Heart right ventricle (tissue), 16 donors: ENCODE measurements at regions of chr15 and their contacts with region 1.

Region 1: DNA sequence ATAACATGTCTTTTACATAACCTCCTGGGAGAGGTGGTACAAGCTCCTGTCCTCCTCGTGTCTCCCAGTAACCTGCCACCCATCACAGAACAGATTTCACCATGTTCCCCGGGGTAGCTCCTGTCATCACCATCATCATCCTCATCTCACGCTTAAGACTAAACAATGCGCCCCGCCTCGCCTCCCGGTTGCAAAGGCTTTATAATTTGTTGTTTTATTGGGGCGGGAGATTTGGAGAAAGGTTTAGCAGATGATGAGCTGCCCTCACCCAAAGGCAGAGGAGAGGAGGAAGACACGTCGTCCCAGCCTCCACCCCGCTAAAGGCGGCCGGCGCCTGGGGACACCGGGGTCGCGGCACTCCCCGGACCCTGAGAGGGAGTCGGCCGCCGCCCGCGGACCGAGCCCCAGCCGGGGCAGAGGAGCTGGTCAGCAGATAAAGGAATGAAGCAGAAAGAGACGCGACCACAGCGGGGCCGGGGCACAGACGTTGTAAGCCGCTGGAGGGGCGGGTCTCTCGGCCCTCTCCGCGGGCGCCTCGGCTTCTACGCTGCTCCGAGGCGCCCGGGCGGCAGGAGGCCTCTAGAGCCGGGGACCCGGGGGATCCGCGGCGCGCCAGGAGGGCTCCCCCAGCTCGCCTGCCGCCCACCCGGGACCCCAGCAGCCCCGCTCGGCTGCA is 589 bp downstream of the HERC1 start:
- DNase-seq: peak; percentile 25 to 41
- ATAC-seq: peak; percentile 33 to 82 (median 58)
- H3K4me3 ChIP-seq: peak overlapping the region; percentile 74 to 97 (median 94)
- H3K27ac ChIP-seq: peak overlapping the region; percentile 84 to 99 (median 97)
- H3K4me1 ChIP-seq: peaks cover 5 to 55% (median 30%) of the 10 kb centered on the region in 9 donors
- H3K27me3 ChIP-seq: no peaks in the 10 kb centered on the region
- CTCF ChIP-seq: no peak

Region 2: GRCh38 chr15:63763476-63764123 is 69.6 kb before region 1 on chr15:
- intact Hi-C with region 1: loop called in 3 of 10 experiments (anchors 5 to 10 kb)
- DNase-seq: no peak
- ATAC-seq: no peak
- H3K4me3 ChIP-seq: no peak overlapping the region
- H3K27ac ChIP-seq: no peak overlapping the region
- H3K4me1 ChIP-seq: peaks cover 0 to 87% (median 46%) of the 10 kb centered on the region in 9 donors
- H3K27me3 ChIP-seq: no peaks in the 10 kb centered on the region
- CTCF ChIP-seq: no peak

Region 3: GRCh38 chr15:63860155-63860554 is 27.0 kb after region 1 on chr15:
- intact Hi-C with region 1: no loop called
- DNase-seq: no peak
- ATAC-seq: peak in 4 of 8 donors; percentile 14 to 55 (median 42)
- H3K4me3 ChIP-seq: no peak overlapping the region
- H3K27ac ChIP-seq: peak overlapping the region in 9 of 10 donors; percentile 15 to 80 (median 59)
- H3K4me1 ChIP-seq: peaks cover 0 to 42% (median 33%) of the 10 kb centered on the region in 9 donors
- H3K27me3 ChIP-seq: no peaks in the 10 kb centered on the region
- CTCF ChIP-seq: no peak

Region 4: GRCh38 chr15:63891079-63891767 is 58.1 kb after region 1 on chr15:
- intact Hi-C with region 1: loop called in 5 of 10 experiments (anchors 2 to 5 kb)
- DNase-seq: peak; percentile 81
- ATAC-seq: peak; percentile 70 to 91 (median 77)
- H3K4me3 ChIP-seq: no peak overlapping the region
- H3K27ac ChIP-seq: peak overlapping the region in 1 of 10 donors; percentile 36
- H3K4me1 ChIP-seq: peaks cover 0 to 76% (median 21%) of the 10 kb centered on the region in 9 donors
- H3K27me3 ChIP-seq: no peaks in the 10 kb centered on the region
- CTCF ChIP-seq: peak; percentile 80 to 92 (median 90)

Region 5: DNA sequence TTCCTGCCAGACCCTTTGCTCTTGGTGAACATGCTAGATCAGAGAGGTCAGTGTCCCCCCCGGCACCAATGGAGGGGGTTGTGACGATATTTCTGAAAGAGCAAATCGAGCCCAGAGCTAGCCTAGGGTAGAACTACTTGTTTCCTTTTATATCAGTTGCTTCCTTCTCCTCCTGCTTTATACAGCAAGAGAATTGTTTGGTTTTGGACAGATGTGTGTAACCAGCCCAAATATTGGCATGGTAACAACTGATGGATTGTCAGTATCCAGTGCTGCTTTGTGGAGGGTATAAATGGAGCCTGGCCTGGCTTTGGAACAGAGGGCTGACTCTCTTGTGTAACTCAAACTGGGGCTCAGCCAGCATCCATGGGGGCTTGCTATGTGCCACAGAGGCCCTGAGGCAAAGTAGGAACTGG is 289.8 kb after region 1 on chr15:
- intact Hi-C with region 1: no loop called
- DNase-seq: no peak
- ATAC-seq: peak in 2 of 8 donors; percentile 47 to 49
- H3K4me3 ChIP-seq: no peak overlapping the region
- H3K27ac ChIP-seq: no peak overlapping the region
- H3K4me1 ChIP-seq: peaks cover 0 to 3% (median 0%) of the 10 kb centered on the region in 9 donors
- H3K27me3 ChIP-seq: no peaks in the 10 kb centered on the region
- CTCF ChIP-seq: no peak